ENCODE measurements at regions of chr11 and their contacts with region 1.

Region 1: DNA sequence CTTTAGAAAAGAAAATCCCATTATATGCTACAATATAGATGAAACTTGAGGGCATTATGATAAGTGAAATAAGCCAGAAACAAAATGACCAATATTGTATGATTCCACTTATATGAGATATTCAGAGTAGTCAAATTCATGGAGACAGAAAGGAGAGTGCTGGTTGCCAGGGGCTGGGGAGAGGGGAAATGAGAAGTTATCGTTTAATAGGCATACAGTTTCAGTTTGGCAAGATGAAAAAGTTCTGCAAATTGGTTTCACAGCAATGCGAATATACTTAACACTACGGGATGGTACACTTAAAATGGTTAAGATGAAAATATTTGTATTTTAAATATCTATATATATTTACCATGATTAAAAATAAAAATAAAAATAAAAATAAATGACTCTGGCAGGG is 31.1 kb upstream of the RDX start:
- DNase-seq: peak; percentile 20
- H3K4me3 ChIP-seq: peak overlapping the region; percentile 74
- H3K27ac ChIP-seq: peak overlapping the region; percentile 85
- H3K4me1 ChIP-seq: peaks cover 27% of the 10 kb centered on the region
- CTCF ChIP-seq: no peak

Region 2: GRCh38 chr11:109772841-109773400 is 554.6 kb before region 1 on chr11:
- CTCF ChIA-PET with region 1: no interaction called
- POLR2A ChIA-PET with region 1: no interaction called
- intact Hi-C with region 1: no loop called
- DNase-seq: no peak
- H3K4me3 ChIP-seq: no peak overlapping the region
- H3K27ac ChIP-seq: no peak overlapping the region
- H3K4me1 ChIP-seq: no peaks in the 10 kb centered on the region
- CTCF ChIP-seq: no peak

Region 3: DNA sequence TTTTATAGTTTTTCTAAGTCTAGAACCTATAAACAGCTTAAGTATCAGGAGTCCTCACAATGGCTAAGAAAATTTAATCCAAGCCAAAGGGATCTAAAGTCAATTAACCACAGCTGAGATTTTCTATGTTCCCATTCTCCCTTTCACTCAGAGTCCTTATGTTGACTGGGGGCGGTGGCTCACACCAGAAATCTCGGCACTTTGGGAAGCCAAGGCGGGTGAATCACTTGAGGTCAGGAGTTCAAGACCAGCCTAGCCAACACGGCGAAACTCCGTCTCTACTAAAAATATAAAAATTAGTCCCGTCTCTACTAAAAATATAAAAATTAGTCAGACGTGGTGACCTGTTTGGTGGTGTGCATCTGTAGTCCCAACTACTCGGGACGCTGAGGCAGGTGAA is 38.0 kb before region 1 on chr11:
- CTCF ChIA-PET with region 1: no interaction called
- POLR2A ChIA-PET with region 1: interaction called, 11 read pairs
- intact Hi-C with region 1: no loop called
- DNase-seq: no peak
- H3K4me3 ChIP-seq: no peak overlapping the region
- H3K27ac ChIP-seq: no peak overlapping the region
- H3K4me1 ChIP-seq: peaks cover 32% of the 10 kb centered on the region
- CTCF ChIP-seq: no peak

Region 4: DNA sequence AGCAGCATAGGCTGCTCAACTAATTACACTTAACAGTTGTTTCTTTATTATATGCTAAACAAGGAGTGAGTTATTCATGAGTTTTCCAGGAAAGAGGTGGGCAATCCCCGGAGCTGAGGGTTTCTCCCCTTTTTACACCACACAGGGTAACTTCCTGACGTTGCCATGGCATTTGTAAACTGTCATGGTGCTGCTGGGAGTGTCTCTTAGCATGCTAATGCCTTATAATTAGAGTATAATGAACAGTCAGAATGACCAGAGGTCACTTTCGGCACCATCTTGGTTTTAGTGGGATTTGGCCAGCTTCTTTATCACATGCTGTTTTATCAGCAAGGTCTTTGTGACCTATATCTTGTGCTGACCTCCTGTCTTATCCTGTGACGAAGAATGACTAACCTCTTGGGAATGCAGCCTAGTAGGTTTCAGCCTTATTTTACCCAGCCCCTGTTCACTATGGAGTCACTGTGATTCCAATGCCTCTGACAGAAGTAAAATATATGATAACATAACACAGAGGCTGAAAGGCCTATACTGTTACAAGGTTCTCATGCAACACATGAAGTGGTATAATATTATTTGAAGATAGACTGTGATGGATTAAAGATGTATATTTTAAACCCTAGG is 10.2 kb after region 1 on chr11:
- CTCF ChIA-PET with region 1: interaction called, 4 read pairs
- POLR2A ChIA-PET with region 1: interaction called, 19 read pairs
- intact Hi-C with region 1: no loop called
- DNase-seq: no peak
- H3K4me3 ChIP-seq: no peak overlapping the region
- H3K27ac ChIP-seq: no peak overlapping the region
- H3K4me1 ChIP-seq: peaks cover 21% of the 10 kb centered on the region
- CTCF ChIP-seq: no peak

Region 5: GRCh38 chr11:110422306-110422905 is 94.9 kb after region 1 on chr11:
- CTCF ChIA-PET with region 1: no interaction called
- POLR2A ChIA-PET with region 1: no interaction called
- intact Hi-C with region 1: no loop called
- DNase-seq: no peak
- H3K4me3 ChIP-seq: no peak overlapping the region
- H3K27ac ChIP-seq: no peak overlapping the region
- H3K4me1 ChIP-seq: no peaks in the 10 kb centered on the region
- CTCF ChIP-seq: no peak